ENCODE measurements at regions of chr4 and their contacts with region 1.

Region 1: DNA sequence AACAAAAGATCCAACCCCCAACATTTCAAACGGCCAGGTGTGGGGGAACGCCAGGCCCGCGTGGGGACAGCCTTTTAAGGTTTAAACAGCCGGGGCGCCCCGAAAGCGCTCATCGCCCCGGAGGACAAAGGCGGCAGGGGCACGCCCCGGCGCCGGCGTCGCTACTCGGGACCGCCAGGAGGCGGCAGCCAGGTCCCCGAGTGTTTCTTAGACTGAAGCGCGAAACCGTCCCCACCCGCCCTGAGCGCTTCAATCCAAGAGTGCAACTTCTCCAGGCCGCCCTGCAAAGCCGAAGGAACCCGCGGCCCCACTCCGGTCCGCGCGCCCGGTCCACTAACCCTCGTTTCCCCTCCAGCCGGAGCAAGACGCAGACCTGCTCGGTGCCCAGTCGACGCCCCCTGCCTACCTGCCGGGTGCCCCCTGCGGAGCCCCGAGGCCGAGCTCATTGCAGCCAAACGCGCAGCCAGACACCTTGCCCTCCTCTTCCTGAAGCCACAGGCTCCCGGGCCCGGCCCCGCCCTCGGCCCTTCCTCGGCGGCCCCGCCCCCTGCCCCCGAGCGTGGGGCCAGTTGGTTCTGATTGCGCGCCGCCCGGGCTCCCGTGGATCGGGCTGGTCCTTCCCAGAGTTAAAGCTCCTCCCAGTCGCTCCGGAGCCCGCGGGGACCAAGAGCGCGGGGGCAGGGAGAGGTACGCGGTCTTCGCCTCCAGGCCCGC is at the start of gene CASP6:
- DNase-seq: peak; percentile 63 to 74
- ATAC-seq: peak; percentile 90 to 91
- H3K4me3 ChIP-seq: peak within 1 kb of the TSS; percentile 79 to 92 (median 82)
- H3K27ac ChIP-seq: peak within 1 kb of the TSS; percentile 76 to 82 (median 78)
- H3K4me1 ChIP-seq: peaks cover 8 to 13% of the 10 kb centered on the region in 2 donors
- H3K27me3 ChIP-seq: no peaks in the 10 kb centered on the region
- CTCF ChIP-seq: peak; percentile 50 to 81 (median 78)
- POLR2A ChIP-seq: peak; percentile 10 to 27
- total RNA-seq, gene CASP6: 6.6 to 25.2 (median 9.0) TPM

Region 2: DNA sequence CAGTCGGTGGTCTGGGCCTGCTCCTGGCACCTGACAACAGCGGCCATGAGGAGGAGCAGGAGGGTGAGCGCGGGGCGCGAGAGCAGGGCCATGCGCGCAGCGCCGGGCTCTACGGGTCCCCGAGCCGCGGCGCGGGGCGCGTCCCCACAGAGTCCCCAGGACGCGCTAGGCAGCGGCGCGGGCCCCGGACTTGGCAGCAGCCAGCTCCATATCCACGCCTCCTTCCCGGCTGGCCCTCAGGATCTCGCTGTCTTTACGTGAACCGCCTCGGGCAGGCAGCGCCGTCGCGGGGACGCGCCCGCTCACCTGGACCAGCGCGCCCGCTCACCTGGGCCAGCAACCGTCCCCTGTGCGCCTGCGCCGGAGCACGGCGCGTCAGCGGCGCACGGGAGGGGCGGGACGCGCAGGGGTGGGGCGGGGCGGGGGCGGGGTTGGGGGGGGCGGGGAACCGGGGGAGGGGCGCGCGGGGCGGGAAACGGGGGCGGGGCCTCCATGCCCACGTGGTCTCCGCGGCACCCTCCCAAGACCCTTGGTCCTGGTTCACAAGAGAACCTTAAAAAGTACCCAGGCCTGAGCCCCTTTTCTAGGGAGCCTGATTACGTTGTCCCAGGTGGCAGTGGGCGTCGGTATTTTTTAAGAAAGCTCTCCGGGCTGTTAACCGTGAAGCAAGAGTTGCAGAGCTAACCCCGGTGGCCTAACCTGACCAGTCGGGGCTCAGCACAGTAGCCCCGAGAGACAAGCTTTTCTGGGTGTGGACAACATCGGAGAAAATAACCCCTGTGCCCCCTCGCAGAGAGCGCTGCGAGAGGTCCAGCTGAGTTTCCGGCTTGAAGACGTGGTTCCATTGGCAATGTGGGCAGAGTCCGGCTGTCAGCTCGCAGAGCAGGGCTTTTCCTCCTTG is 26.9 kb after region 1 on chr4 and contains the start of gene PLA2G12A:
- in situ Hi-C with region 1: no loop called
- intact Hi-C with region 1: loop called (anchors 1 kb)
- DNase-seq: peak; percentile 54 to 61
- ATAC-seq: peak; percentile 77 to 85
- H3K4me3 ChIP-seq: peak within 1 kb of the TSS; percentile 86 to 99 (median 94)
- H3K27ac ChIP-seq: peak within 1 kb of the TSS; percentile 91 to 96 (median 95)
- H3K4me1 ChIP-seq: peaks cover 14 to 19% of the 10 kb centered on the region in 2 donors
- H3K27me3 ChIP-seq: no peaks in the 10 kb centered on the region
- CTCF ChIP-seq: no peak
- POLR2A ChIP-seq: peak; percentile 71 to 72
- total RNA-seq, gene PLA2G12A: 26.7 to 83.1 (median 57.6) TPM

Region 3: GRCh38 chr4:109815151-109816081 is 112.3 kb after region 1 on chr4 and contains the start of gene GAR1:
- in situ Hi-C with region 1: loop called in 1 of 4 experiments (anchors 25 kb)
- intact Hi-C with region 1: loop called (anchors 5 kb)
- DNase-seq: peak; percentile 85 to 86
- ATAC-seq: peak; percentile 99 to 100
- H3K4me3 ChIP-seq: peak within 1 kb of the TSS; percentile 70 to 99 (median 88)
- H3K27ac ChIP-seq: peak within 1 kb of the TSS; percentile 82 to 90 (median 86)
- H3K4me1 ChIP-seq: peaks cover 14 to 22% of the 10 kb centered on the region in 2 donors
- H3K27me3 ChIP-seq: no peaks in the 10 kb centered on the region
- CTCF ChIP-seq: peak in 1 of 5 experiments; percentile 9
- POLR2A ChIP-seq: peak in 1 of 2 donors; percentile 18
- total RNA-seq, gene GAR1: 2.8 to 7.2 (median 3.5) TPM

Region 4: DNA sequence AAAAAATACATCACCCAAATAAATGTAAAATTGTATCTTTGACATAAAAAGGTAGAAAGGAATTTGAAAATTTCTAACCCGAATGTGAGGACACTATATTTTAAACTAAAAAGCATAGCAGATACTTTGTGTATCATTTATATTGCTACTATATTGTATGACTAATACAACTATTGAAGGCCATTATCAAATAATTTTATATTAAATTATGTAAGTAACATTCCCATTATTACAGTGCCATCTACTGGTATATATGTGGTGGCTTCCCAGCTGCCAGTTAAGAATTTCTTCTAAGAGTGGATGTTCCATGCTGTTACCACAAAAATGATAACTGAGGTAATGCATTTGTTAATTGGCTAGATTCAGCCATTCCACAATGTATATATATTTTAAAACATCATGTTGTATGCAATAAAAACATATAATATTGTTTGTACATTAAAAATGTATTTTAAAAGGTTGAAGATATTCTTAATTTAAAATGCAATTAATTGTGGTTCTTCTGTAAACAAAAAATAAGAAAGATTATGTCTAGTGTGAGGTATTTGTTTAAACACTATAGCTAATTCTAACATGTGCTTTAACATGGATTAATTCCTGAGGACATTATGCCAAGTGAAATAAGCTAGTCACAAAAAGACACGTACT is 274.9 kb after region 1 on chr4:
- in situ Hi-C with region 1: loop called in 1 of 4 experiments (anchors 25 kb)
- intact Hi-C with region 1: loop called (anchors 2 kb)
- DNase-seq: no peak
- ATAC-seq: peak in 1 of 2 donors; percentile 49
- H3K4me3 ChIP-seq: no peak overlapping the region
- H3K27ac ChIP-seq: no peak overlapping the region
- H3K4me1 ChIP-seq: no peaks in the 10 kb centered on the region
- H3K27me3 ChIP-seq: no peaks in the 10 kb centered on the region
- CTCF ChIP-seq: peak in 4 of 5 experiments; percentile 38 to 65 (median 48)
- POLR2A ChIP-seq: no peak

Measured in gastrocnemius medialis (tissue), 4 donors.